ENCODE measurements at regions of chr4 and their contacts with region 1.

Region 1: GRCh38 chr4:88514557-88515511 is 8.7 kb downstream of the PYURF start:
- DNase-seq: no peak
- ATAC-seq: no peak
- H3K4me3 Mint-ChIP-seq: no peak overlapping the region
- H3K27ac Mint-ChIP-seq: no peak overlapping the region
- H3K4me1 Mint-ChIP-seq: no peaks in the 10 kb centered on the region
- H3K27me3 Mint-ChIP-seq: peaks cover 4% of the 10 kb centered on the region

Region 2: GRCh38 chr4:88211473-88212252 is 303.2 kb before region 1 on chr4:
- CTCF ChIA-PET with region 1: interaction called, 156 read pairs
- POLR2A ChIA-PET with region 1: no interaction called
- DNase-seq: peak; percentile 74
- ATAC-seq: peak; percentile 67
- H3K4me3 Mint-ChIP-seq: no peak overlapping the region
- H3K27ac Mint-ChIP-seq: no peak overlapping the region
- H3K4me1 Mint-ChIP-seq: peaks cover 3% of the 10 kb centered on the region
- H3K27me3 Mint-ChIP-seq: peaks cover 10% of the 10 kb centered on the region

Region 3: DNA sequence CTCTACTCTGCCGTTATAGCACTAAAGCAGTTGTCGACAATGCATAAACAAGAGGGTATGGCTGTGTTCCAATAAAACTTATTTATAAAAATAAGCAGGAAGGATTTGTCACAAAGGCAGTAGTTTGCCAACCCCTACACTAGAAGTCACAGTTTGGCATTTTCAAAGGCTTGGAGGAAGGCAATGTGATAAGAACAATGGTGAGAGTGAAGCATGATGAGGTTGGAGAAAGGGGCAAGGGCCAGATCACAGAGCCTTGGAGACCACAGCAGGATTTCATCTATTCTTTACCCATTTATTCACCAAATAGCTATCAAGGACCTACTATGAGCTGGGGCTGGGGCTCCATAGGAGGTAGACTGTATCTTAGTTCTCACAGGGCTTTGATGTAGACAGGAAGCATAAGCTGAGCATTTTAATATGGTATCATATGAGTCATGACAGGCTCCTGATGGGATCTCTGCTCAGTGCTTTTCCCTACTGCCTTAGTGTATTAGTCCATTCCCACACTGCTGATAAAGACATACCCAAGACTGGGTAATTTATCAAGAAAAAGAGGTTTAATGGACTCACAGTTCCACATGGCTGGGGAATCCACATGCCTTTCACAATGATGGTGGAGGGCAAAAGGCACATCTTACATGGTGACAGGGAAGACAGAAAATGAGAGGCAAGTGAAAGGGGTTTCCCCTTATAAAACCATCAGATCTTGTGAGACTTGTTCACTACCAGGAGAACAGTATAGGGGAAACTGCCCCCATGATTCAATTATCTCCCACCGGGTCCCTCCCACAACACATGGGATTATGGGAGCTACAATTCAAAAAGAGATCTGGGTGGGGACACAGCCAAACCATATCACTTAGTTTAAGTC is 289.4 kb before region 1 on chr4:
- CTCF ChIA-PET with region 1: interaction called, 156 read pairs
- POLR2A ChIA-PET with region 1: no interaction called
- DNase-seq: no peak
- ATAC-seq: no peak
- H3K4me3 Mint-ChIP-seq: no peak overlapping the region
- H3K27ac Mint-ChIP-seq: no peak overlapping the region
- H3K4me1 Mint-ChIP-seq: peaks cover 4% of the 10 kb centered on the region
- H3K27me3 Mint-ChIP-seq: peaks cover 2% of the 10 kb centered on the region

Region 4: GRCh38 chr4:88284439-88285234 is 230.2 kb before region 1 on chr4 and contains the start of gene PPM1K:
- CTCF ChIA-PET with region 1: interaction called, 19 read pairs
- POLR2A ChIA-PET with region 1: no interaction called
- DNase-seq: peak; percentile 99
- ATAC-seq: peak; percentile 91
- H3K4me3 Mint-ChIP-seq: peak within 1 kb of the TSS; percentile 99
- H3K27ac Mint-ChIP-seq: peak within 1 kb of the TSS; percentile 97
- H3K4me1 Mint-ChIP-seq: peaks cover 43% of the 10 kb centered on the region
- H3K27me3 Mint-ChIP-seq: no peaks in the 10 kb centered on the region
- total RNA-seq, gene PPM1K: 58.4 to 59.3 TPM

Region 5: DNA sequence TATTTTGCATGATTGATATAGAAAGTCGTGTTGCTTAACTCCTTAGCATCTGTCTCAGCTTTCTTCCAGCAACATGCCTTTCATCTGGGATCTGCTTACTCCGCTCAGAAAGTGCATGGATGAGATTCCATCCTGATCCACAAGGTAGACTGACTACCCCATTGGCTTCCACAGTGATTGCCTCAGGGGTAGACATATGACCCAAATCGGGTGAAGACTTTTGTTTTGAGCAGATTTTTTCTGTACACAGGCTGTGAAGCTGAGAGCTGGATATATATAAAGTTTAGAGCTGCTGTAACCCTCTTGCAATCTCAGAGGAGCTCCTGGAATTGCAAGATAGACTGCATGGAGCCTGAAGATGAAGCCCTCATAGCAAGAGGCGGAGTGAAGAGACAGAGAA is 144.9 kb before region 1 on chr4:
- CTCF ChIA-PET with region 1: interaction called, 37 read pairs
- POLR2A ChIA-PET with region 1: no interaction called
- DNase-seq: no peak
- ATAC-seq: no peak
- H3K4me3 Mint-ChIP-seq: no peak overlapping the region
- H3K27ac Mint-ChIP-seq: no peak overlapping the region
- H3K4me1 Mint-ChIP-seq: peaks cover 12% of the 10 kb centered on the region
- H3K27me3 Mint-ChIP-seq: no peaks in the 10 kb centered on the region

Region 6: GRCh38 chr4:88503344-88503743 is 11.5 kb before region 1 on chr4:
- CTCF ChIA-PET with region 1: interaction called, 52 read pairs
- POLR2A ChIA-PET with region 1: no interaction called
- DNase-seq: no peak
- ATAC-seq: no peak
- H3K4me3 Mint-ChIP-seq: no peak overlapping the region
- H3K27ac Mint-ChIP-seq: no peak overlapping the region
- H3K4me1 Mint-ChIP-seq: peaks cover 11% of the 10 kb centered on the region
- H3K27me3 Mint-ChIP-seq: no peaks in the 10 kb centered on the region

Measured in activated CD8-positive, alpha-beta T cell treated with anti-CD3 and anti-CD28 coated beads, Interleukin-2, amount 10 ng/mL, durations not matched to agents 7 days and 5 days (primary cell).